GM12878 (cell line): ENCODE measurements at regions of chr2 and their contacts with region 1.

Region 1: DNA sequence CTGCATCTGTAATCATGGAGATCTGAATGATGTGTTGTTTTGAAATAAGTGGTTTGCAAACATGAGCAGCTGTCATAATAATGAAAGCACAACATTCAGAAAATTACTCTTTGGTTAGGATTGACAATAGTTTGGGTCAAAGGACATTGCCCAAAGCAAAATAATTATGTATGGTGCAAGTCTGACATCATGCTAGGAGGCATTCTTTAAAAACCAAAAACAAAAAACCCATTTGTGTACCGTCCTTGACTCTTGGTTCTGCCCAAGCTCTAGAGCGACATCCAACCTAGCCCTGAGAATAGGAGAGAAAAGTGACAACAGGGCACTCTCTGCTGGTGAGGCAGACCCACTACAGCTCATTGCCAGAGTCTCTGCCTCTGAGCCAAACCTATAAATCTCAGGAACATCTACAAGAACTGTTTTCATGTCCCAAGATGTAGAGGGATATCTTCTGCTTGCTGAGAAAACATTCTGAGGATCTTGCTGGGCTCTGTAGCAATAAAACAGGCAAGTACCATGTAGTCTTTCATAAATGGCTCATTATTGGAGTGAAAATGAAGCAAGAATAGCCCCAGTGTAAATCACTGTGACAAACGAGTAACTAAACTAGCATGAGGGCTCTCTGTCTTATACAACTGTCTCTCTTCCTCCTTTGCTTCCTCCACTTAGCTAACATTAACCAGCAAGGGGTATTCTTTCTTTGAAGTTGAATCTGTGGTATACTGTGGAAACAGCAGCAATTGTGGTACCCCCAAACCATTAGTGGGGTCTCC is 266.8 kb upstream of the CXCR4 start:
- DNase-seq: no peak
- ATAC-seq: peak; percentile 68
- H3K4me3 ChIP-seq: no peak overlapping the region
- H3K27ac ChIP-seq: no peak overlapping the region
- H3K4me1 ChIP-seq: peaks cover 21% of the 10 kb centered on the region
- H3K27me3 ChIP-seq: no peaks in the 10 kb centered on the region
- CTCF ChIP-seq: peak; percentile 83 to 92 (median 87)
- EP300 ChIP-seq: peak; percentile 28 to 37; a peak in 1 of 4 replicates
- POLR2A ChIP-seq: no peak
- RAD21 ChIP-seq: peak; percentile 91

Region 2: DNA sequence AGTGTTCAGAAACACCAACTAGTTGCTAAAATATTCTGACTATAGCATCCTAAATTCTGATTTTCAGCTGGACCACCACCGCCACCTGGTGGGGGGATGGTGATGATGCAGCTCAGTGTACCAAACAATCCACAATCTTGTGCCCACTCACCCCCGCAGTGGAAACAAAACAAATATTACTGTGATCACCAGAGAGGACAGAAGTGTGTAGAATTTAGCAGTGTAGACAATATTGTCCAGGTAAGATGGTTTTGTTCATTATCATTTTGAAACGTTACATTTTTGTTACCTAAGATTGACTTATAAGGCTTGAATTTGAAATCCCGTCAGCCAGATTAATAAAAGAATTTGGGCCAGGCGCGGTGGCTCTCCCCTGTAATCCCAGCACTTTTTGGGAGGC is 674.7 kb before region 1 on chr2:
- CTCF ChIA-PET with region 1: interaction called, 17 read pairs
- POLR2A ChIA-PET with region 1: no interaction called
- RAD21 ChIA-PET with region 1: interaction called, 19 read pairs
- SMC1A ChIA-PET with region 1: interaction called, 8 read pairs
- in situ Hi-C with region 1: no loop called
- intact Hi-C with region 1: no loop called
- DNase-seq: no peak
- ATAC-seq: peak; percentile 89
- H3K4me3 ChIP-seq: no peak overlapping the region
- H3K27ac ChIP-seq: no peak overlapping the region
- H3K4me1 ChIP-seq: no peaks in the 10 kb centered on the region
- H3K27me3 ChIP-seq: no peaks in the 10 kb centered on the region
- CTCF ChIP-seq: peak; percentile 87 to 89 (median 89)
- EP300 ChIP-seq: no peak
- POLR2A ChIP-seq: no peak
- RAD21 ChIP-seq: peak; percentile 95

Region 3: DNA sequence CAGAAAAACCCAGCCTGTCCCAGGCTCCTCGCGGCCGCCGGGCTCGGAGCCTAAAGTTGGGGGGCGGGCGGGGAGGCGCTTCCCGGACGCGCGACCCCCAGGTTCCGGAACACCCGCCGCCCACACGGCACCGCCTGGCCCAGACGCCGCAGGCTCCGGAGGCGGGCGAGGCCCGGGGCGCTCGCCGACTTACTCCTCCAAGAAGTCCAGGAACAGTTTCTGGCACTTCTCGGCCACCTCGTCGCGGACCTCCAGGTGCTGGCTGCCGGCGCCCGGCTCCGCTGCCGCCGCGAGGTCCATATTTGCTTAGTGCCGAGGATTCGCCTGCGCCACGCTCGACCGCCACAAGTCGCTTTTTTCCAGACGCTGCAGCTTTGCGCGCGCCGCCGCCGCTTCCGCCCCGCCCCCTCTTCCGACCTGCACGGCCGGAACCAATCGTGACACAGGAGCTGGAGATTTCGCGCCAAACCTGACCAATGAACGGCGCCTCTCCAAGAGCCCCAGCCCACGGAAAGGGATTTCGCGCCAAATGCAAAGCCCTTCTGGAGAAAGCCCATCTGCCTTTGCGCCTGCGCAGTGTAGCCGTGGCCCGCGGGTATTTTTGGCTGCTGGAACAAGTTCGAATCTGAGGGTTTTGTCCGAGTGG is 508.5 kb before region 1 on chr2 and contains the start of gene MCM6:
- CTCF ChIA-PET with region 1: interaction called, 5 read pairs
- POLR2A ChIA-PET with region 1: interaction called, 6 read pairs
- RAD21 ChIA-PET with region 1: interaction called, 11 read pairs
- SMC1A ChIA-PET with region 1: interaction called, 10 read pairs
- in situ Hi-C with region 1: no loop called
- intact Hi-C with region 1: no loop called
- DNase-seq: peak; percentile 94
- ATAC-seq: peak; percentile 91
- H3K4me3 ChIP-seq: peak within 1 kb of the TSS; percentile 95
- H3K27ac ChIP-seq: peak within 1 kb of the TSS; percentile 86
- H3K4me1 ChIP-seq: peaks cover 4% of the 10 kb centered on the region; the same call in 1 of the 2 replicates
- H3K27me3 ChIP-seq: no peaks in the 10 kb centered on the region
- CTCF ChIP-seq: no peak
- EP300 ChIP-seq: no peak
- POLR2A ChIP-seq: peak; percentile 51; the same call in 1 of the 2 replicates
- RAD21 ChIP-seq: no peak
- polyA plus RNA-seq, gene MCM6: 37.4 to 74.4 TPM

Region 4: DNA sequence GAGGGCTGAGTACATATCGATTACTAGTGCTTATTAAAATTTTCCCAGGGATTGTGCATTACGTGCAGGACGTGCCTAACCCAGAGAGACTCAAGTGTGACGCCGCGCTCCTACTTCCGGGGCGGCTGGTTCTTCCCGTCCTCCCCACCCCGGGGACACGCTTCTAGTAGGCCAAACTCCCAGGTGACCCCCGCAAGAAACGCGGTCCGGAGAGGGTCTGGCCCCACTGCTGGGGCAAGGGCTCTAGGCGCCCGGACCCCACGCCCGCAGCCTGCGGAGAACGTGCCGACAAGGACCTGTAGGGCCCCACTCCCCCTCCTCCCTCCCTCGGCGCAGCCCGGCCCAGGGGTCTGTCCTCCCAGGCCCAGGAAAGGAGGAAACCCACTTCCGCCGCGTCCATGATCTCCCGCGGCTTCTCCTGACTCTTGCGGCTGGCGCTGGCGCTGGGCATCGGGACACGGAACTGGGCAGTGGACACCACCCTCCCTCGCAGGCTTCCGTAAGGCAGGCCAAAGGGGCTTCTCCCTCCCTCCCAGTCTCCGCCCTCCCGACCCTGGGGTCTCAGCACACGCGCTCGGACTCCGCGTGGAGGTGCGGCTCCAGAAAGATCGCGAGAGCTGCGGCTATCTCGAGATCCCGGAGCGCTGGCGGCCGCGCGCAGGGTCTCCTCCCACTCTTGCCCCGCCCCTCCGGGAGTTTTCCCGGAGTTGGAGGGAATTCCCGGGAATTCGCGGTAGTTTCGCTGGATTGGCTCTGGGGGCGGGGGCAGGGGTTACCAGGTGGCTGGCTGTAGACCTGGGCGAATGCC is 399.5 kb before region 1 on chr2 and contains the start of gene DARS1:
- CTCF ChIA-PET with region 1: interaction called, 7 read pairs
- POLR2A ChIA-PET with region 1: no interaction called
- RAD21 ChIA-PET with region 1: interaction called, 19 read pairs
- SMC1A ChIA-PET with region 1: interaction called, 12 read pairs
- in situ Hi-C with region 1: no loop called
- intact Hi-C with region 1: loop called (anchors 2 kb)
- DNase-seq: peak; percentile 79
- ATAC-seq: peak; percentile 86
- H3K4me3 ChIP-seq: peak within 1 kb of the TSS; percentile 88
- H3K27ac ChIP-seq: peak within 1 kb of the TSS; percentile 95
- H3K4me1 ChIP-seq: peaks cover 8% of the 10 kb centered on the region
- H3K27me3 ChIP-seq: no peaks in the 10 kb centered on the region
- CTCF ChIP-seq: no peak
- EP300 ChIP-seq: peak in 1 of 2 experiments; percentile 31; a peak in 2 of 4 replicates
- POLR2A ChIP-seq: peak; percentile 95
- RAD21 ChIP-seq: no peak
- polyA plus RNA-seq, gene DARS1: 102 to 134 TPM

Region 5: DNA sequence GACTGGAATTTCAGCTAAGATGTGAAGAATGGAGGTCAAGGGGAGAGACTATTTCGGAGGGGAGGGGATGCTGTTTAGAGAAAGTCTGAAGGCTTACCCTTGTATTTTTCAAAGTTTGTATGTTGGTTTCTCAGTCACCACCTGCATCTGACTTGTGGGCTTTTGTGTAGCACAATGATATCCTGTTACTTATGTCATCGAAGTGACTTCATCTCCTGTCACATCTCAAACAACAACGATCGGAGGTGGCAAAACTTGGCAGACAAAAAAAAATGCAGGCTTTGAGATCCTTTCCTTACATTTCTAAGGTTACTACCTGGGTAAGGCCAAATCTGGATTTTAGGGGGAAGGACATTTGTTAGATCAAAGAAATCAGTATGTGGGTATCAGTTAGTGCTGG is 255.1 kb before region 1 on chr2:
- CTCF ChIA-PET with region 1: interaction called, 11 read pairs
- POLR2A ChIA-PET with region 1: interaction called, 5 read pairs
- RAD21 ChIA-PET with region 1: interaction called, 148 read pairs
- SMC1A ChIA-PET with region 1: interaction called, 81 read pairs
- in situ Hi-C with region 1: loop called (anchors 5 kb)
- intact Hi-C with region 1: loop called (anchors 1 kb)
- DNase-seq: no peak
- ATAC-seq: no peak
- H3K4me3 ChIP-seq: no peak overlapping the region
- H3K27ac ChIP-seq: no peak overlapping the region
- H3K4me1 ChIP-seq: peaks cover 24% of the 10 kb centered on the region
- H3K27me3 ChIP-seq: peaks cover 0 to 9% of the 10 kb centered on the region in 2 experiments; a peak in 2 of 4 replicates
- CTCF ChIP-seq: no peak
- EP300 ChIP-seq: peak in 1 of 2 experiments; percentile 73; a peak in 2 of 4 replicates
- POLR2A ChIP-seq: no peak
- RAD21 ChIP-seq: no peak

Region 6: GRCh38 chr2:136255648-136256463 is 128.9 kb before region 1 on chr2:
- CTCF ChIA-PET with region 1: interaction called, 17 read pairs
- POLR2A ChIA-PET with region 1: interaction called, 8 read pairs
- RAD21 ChIA-PET with region 1: interaction called, 16 read pairs
- SMC1A ChIA-PET with region 1: interaction called, 65 read pairs
- in situ Hi-C with region 1: no loop called
- intact Hi-C with region 1: loop called (anchors 2 kb)
- DNase-seq: no peak
- ATAC-seq: peak; percentile 78
- H3K4me3 ChIP-seq: no peak overlapping the region
- H3K27ac ChIP-seq: no peak overlapping the region
- H3K4me1 ChIP-seq: peaks cover 12% of the 10 kb centered on the region
- H3K27me3 ChIP-seq: no peaks in the 10 kb centered on the region; a peak in 1 of 4 replicates
- CTCF ChIP-seq: peak in 2 of 3 experiments; percentile 9 to 27; a peak in 3 of 6 replicates
- EP300 ChIP-seq: peak in 1 of 2 experiments; percentile 63; a peak in 1 of 4 replicates
- POLR2A ChIP-seq: no peak
- RAD21 ChIP-seq: no peak

Region 7: DNA sequence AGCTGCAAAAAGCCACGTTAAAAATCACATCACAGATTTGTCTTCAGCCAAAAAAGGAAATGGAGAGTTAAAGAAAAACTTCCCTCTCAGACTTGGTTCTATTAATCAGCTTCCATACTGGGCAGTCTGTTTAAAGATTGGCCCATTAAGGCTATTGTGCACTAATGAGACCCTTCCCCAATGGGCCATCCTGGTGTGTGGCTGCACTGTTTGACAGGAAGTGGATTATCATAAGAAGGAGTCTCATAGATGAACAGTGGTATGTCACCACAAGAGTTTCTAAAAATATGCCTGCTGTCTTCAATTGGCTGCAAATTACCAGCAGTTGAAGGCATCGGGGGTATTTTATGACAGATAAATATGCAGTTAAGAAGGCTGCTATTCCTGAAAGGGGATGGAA is 133.0 kb after region 1 on chr2:
- CTCF ChIA-PET with region 1: no interaction called
- POLR2A ChIA-PET with region 1: no interaction called
- RAD21 ChIA-PET with region 1: no interaction called
- SMC1A ChIA-PET with region 1: no interaction called
- in situ Hi-C with region 1: no loop called
- intact Hi-C with region 1: no loop called
- DNase-seq: no peak
- ATAC-seq: no peak
- H3K4me3 ChIP-seq: no peak overlapping the region
- H3K27ac ChIP-seq: no peak overlapping the region
- H3K4me1 ChIP-seq: no peaks in the 10 kb centered on the region
- H3K27me3 ChIP-seq: peaks cover 2 to 4% of the 10 kb centered on the region in 2 experiments; a peak in 3 of 4 replicates
- CTCF ChIP-seq: no peak
- EP300 ChIP-seq: no peak
- POLR2A ChIP-seq: no peak
- RAD21 ChIP-seq: no peak